Dendritic cell treated with granulocyte-macrophage colony-stimulating factor and Interleukin-4, amounts not matched to agents 40 ng/mL and 50 ng/mL, for 4 days (primary cell): ENCODE measurements at regions of chr2 and their contacts with region 1.

Region 1: GRCh38 chr2:3651691-3652648 is 6.0 kb upstream of the ALLC start:
- H3K4me3 Mint-ChIP-seq: peak overlapping the region; percentile 71
- H3K27ac Mint-ChIP-seq: peak overlapping the region; percentile 57
- H3K4me1 Mint-ChIP-seq: peaks cover 17% of the 10 kb centered on the region
- H3K27me3 Mint-ChIP-seq: peaks cover 49% of the 10 kb centered on the region

Region 2: GRCh38 chr2:2121887-2122286 is 1530.1 kb before region 1 on chr2:
- intact Hi-C with region 1: loop called (anchors 5 kb)
- H3K4me3 Mint-ChIP-seq: no peak overlapping the region
- H3K27ac Mint-ChIP-seq: no peak overlapping the region
- H3K4me1 Mint-ChIP-seq: no peaks in the 10 kb centered on the region
- H3K27me3 Mint-ChIP-seq: peaks cover 4% of the 10 kb centered on the region

Region 3: GRCh38 chr2:3423492-3424175 is 228.3 kb before region 1 on chr2:
- intact Hi-C with region 1: loop called (anchors 1 kb)
- H3K4me3 Mint-ChIP-seq: no peak overlapping the region
- H3K27ac Mint-ChIP-seq: no peak overlapping the region
- H3K4me1 Mint-ChIP-seq: peaks cover 6% of the 10 kb centered on the region
- H3K27me3 Mint-ChIP-seq: no peaks in the 10 kb centered on the region